CD8-positive, alpha-beta memory T cell (primary cell): ENCODE measurements at regions of chr3 and their contacts with region 1.

Region 1: GRCh38 chr3:195850857-195851543 is 39.3 kb upstream of the MUC4 start:
- DNase-seq: peak; percentile 79 to 91 (median 81)
- H3K4me3 ChIP-seq: no peak overlapping the region
- H3K4me3 Mint-ChIP-seq: peak overlapping the region in 4 of 7 donors; percentile 8 to 44 (median 28)
- H3K27ac ChIP-seq: no peak overlapping the region
- H3K27ac Mint-ChIP-seq: peak overlapping the region in 1 of 8 donors; percentile 29
- H3K4me1 ChIP-seq: peaks cover 6% of the 10 kb centered on the region
- H3K4me1 Mint-ChIP-seq: peaks cover 9 to 17% (median 9%) of the 10 kb centered on the region in 3 donors
- H3K27me3 ChIP-seq: no peaks in the 10 kb centered on the region
- H3K27me3 Mint-ChIP-seq: peaks cover 2 to 11% of the 10 kb centered on the region in 2 donors

Region 2: DNA sequence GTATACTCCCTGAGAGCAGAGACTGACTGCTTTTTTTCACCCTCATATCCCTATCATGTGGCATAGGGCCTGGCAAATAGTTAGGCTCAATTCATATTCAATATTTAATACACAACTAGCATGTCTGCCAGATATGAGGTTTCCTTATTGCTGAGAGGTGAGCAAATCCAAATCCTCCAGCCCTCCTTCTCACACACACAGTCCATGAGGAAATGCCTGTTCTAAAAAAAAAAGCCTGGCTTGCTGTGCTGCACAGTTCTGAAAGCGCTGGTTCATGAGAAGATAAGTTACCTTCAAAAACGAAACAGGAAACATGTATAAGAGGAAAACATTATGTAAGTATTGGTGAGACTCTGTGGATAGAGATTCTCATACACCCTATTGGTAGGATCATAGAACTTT is 392.7 kb before region 1 on chr3:
- CTCF ChIA-PET with region 1: no interaction called
- POLR2A ChIA-PET with region 1: no interaction called
- DNase-seq: peak in 2 of 5 donors; percentile 29 to 59
- H3K4me3 ChIP-seq: no peak overlapping the region
- H3K4me3 Mint-ChIP-seq: peak overlapping the region in 6 of 7 donors; percentile 47 to 79 (median 71)
- H3K27ac ChIP-seq: peak overlapping the region; percentile 7
- H3K27ac Mint-ChIP-seq: peak overlapping the region; percentile 12 to 97 (median 88)
- H3K4me1 ChIP-seq: peaks cover 15% of the 10 kb centered on the region
- H3K4me1 Mint-ChIP-seq: peaks cover 10 to 19% (median 12%) of the 10 kb centered on the region in 3 donors
- H3K27me3 ChIP-seq: no peaks in the 10 kb centered on the region
- H3K27me3 Mint-ChIP-seq: no peaks in the 10 kb centered on the region

Region 3: DNA sequence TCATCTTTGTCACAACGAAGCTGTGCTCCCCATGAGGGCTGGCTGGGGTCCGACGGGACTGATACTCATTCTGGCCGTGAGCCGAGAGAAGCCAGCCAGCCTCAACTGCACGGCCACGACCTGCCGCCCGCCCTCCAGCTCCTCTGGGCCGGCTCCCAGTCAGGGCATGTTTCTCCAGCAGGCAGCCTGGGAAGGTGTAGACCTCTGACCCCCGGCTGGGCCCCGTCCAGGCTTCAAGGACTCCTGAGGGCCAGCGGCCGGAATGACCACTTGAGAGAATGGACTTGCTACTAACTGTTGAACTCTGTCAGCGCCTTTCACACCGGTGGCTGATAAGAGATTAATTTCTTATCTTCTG is 21.1 kb before region 1 on chr3:
- CTCF ChIA-PET with region 1: interaction called, 13 read pairs
- POLR2A ChIA-PET with region 1: no interaction called
- DNase-seq: no peak
- H3K4me3 ChIP-seq: no peak overlapping the region
- H3K4me3 Mint-ChIP-seq: no peak overlapping the region
- H3K27ac ChIP-seq: no peak overlapping the region
- H3K27ac Mint-ChIP-seq: no peak overlapping the region
- H3K4me1 ChIP-seq: no peaks in the 10 kb centered on the region
- H3K4me1 Mint-ChIP-seq: no peaks in the 10 kb centered on the region
- H3K27me3 ChIP-seq: no peaks in the 10 kb centered on the region
- H3K27me3 Mint-ChIP-seq: peaks cover 0 to 7% of the 10 kb centered on the region in 2 donors

Region 4: GRCh38 chr3:195839282-195840010 is 11.6 kb before region 1 on chr3:
- CTCF ChIA-PET with region 1: interaction called, 14 read pairs
- POLR2A ChIA-PET with region 1: no interaction called
- DNase-seq: no peak
- H3K4me3 ChIP-seq: no peak overlapping the region
- H3K4me3 Mint-ChIP-seq: no peak overlapping the region
- H3K27ac ChIP-seq: no peak overlapping the region
- H3K27ac Mint-ChIP-seq: no peak overlapping the region
- H3K4me1 ChIP-seq: no peaks in the 10 kb centered on the region
- H3K4me1 Mint-ChIP-seq: no peaks in the 10 kb centered on the region
- H3K27me3 ChIP-seq: no peaks in the 10 kb centered on the region
- H3K27me3 Mint-ChIP-seq: peaks cover 4 to 12% of the 10 kb centered on the region in 2 donors

Region 5: GRCh38 chr3:195863121-195864006 is 12.4 kb after region 1 on chr3:
- CTCF ChIA-PET with region 1: interaction called, 17 read pairs
- POLR2A ChIA-PET with region 1: no interaction called
- DNase-seq: peak; percentile 34 to 72 (median 44)
- H3K4me3 ChIP-seq: no peak overlapping the region
- H3K4me3 Mint-ChIP-seq: no peak overlapping the region
- H3K27ac ChIP-seq: no peak overlapping the region
- H3K27ac Mint-ChIP-seq: peak overlapping the region in 4 of 8 donors; percentile 38 to 79 (median 50)
- H3K4me1 ChIP-seq: peaks cover 8% of the 10 kb centered on the region
- H3K4me1 Mint-ChIP-seq: peaks cover 4 to 7% (median 4%) of the 10 kb centered on the region in 3 donors
- H3K27me3 ChIP-seq: no peaks in the 10 kb centered on the region
- H3K27me3 Mint-ChIP-seq: no peaks in the 10 kb centered on the region

Region 6: DNA sequence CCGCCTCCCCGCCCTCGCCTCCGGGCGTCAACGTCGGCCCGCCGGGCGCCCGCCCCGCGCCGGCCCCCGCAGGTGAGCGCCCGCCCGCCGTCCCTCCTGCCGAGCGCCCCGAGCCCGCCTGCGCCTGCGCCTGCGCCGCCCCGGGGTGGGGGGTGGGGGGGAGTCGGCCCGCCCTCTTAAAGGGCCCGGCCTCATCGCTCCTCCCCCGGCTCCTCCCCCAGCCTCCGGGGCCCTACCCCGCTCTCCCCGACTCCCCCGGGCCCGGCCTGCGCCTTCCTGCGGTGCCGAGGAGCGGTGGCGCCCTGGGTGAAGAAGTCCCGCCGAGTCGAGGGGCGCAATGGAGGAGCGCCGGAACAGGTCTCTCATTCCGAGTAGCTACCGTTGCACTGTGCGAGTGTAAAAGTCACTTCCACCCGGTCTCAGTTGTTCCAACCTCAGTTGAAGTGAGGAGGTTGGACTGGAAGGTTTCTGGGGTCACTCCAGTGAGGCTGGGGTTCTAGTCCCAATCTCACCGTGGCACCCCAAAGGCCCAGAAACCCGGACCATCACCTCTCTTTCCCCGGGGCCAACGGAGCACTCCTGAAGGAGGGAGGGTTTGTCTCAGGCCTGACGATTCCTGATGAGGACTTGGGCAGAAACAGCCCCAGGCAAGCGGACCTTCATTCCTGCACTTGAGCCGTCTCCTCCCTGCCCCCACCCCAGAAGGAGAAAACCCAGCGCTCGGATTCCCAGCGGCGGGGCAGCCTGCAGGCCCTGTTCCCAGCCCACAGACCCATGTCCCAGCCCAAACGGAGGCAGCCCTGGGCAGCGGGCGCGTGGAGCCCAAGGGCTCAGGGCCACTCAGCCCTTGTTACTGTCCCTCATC is 58.9 kb after region 1 on chr3:
- CTCF ChIA-PET with region 1: interaction called, 13 read pairs
- POLR2A ChIA-PET with region 1: interaction called, 3 read pairs
- DNase-seq: peak; percentile 84 to 92 (median 86)
- H3K4me3 ChIP-seq: peak overlapping the region; percentile 54
- H3K4me3 Mint-ChIP-seq: peak overlapping the region; percentile 58 to 91 (median 72)
- H3K27ac ChIP-seq: peak overlapping the region; percentile 64
- H3K27ac Mint-ChIP-seq: peak overlapping the region in 6 of 8 donors; percentile 36 to 89 (median 72)
- H3K4me1 ChIP-seq: peaks cover 41% of the 10 kb centered on the region
- H3K4me1 Mint-ChIP-seq: peaks cover 33 to 47% (median 39%) of the 10 kb centered on the region in 3 donors
- H3K27me3 ChIP-seq: no peaks in the 10 kb centered on the region
- H3K27me3 Mint-ChIP-seq: peaks cover 0 to 3% of the 10 kb centered on the region in 2 donors